Mucosa of descending colon (tissue), 3 donors: ENCODE measurements at regions of chr19 and their contacts with region 1.

Region 1: DNA sequence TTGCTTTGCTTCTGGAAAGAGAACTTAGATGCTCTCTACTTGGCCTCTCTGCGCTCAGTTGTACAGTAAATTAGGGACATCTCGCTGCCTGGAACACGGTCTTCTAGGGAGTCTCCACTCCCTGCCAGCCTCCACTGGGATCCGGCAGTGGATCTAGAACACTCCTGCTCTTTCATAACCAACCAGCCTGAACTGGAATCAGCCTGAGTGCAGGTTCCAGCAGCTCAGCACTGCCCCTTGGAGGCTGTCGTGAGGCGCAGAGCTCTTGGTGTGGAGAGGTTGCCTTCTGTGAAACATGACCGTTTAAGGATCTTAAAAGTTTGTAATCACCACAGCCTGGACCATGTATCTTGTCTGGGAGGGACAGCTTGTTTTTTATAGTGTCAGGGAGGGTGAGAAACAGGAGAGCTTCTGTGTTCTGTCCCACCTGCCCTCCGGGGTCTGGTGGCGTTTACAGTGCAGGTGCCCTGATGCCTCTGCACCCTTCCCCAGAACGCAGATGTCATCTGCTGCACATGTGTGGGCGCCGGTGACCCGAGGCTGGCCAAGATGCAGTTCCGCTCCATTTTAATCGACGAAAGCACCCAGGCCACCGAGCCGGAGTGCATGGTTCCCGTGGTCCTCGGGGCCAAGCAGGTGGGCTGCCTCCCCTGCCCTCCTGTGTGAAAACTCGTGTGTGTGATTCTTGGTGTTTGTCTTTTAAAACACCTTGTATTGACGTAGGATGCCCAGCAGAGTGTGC is 24.8 kb downstream of the UPF1 start:
- DNase-seq: no peak
- ATAC-seq: peak; percentile 44
- H3K4me3 ChIP-seq: no peak overlapping the region
- H3K4me1 ChIP-seq: no peaks in the 10 kb centered on the region
- CTCF ChIP-seq: no peak

Region 2: GRCh38 chr19:18440415-18440877 is 416.1 kb before region 1 on chr19:
- intact Hi-C with region 1: loop called in 1 of 2 experiments (anchors 10 kb)
- DNase-seq: peak in 1 of 3 donors; percentile 61
- ATAC-seq: peak; percentile 14
- H3K4me3 ChIP-seq: no peak overlapping the region
- H3K4me1 ChIP-seq: peaks cover 18% of the 10 kb centered on the region
- CTCF ChIP-seq: no peak

Region 3: GRCh38 chr19:18450931-18451845 is 405.4 kb before region 1 on chr19:
- intact Hi-C with region 1: loop called (anchors 10 kb)
- DNase-seq: peak; percentile 87 to 96 (median 92)
- ATAC-seq: peak; percentile 93
- H3K4me3 ChIP-seq: no peak overlapping the region
- H3K4me1 ChIP-seq: peaks cover 3% of the 10 kb centered on the region
- CTCF ChIP-seq: peak; percentile 98

Region 4: GRCh38 chr19:18940769-18941407 is 84.3 kb after region 1 on chr19 and contains the start of gene HOMER3:
- intact Hi-C with region 1: no loop called
- DNase-seq: peak; percentile 77 to 89 (median 89)
- ATAC-seq: peak; percentile 94
- H3K4me3 ChIP-seq: peak within 1 kb of the TSS; percentile 14
- H3K4me1 ChIP-seq: peaks cover 3% of the 10 kb centered on the region
- CTCF ChIP-seq: peak; percentile 12
- total RNA-seq, gene HOMER3: 2.2 to 18.0 (median 6.5) TPM